Left ventricle myocardium superior (tissue), 1 donor: ENCODE measurements at regions of chr2 and their contacts with region 1.

Region 1: DNA sequence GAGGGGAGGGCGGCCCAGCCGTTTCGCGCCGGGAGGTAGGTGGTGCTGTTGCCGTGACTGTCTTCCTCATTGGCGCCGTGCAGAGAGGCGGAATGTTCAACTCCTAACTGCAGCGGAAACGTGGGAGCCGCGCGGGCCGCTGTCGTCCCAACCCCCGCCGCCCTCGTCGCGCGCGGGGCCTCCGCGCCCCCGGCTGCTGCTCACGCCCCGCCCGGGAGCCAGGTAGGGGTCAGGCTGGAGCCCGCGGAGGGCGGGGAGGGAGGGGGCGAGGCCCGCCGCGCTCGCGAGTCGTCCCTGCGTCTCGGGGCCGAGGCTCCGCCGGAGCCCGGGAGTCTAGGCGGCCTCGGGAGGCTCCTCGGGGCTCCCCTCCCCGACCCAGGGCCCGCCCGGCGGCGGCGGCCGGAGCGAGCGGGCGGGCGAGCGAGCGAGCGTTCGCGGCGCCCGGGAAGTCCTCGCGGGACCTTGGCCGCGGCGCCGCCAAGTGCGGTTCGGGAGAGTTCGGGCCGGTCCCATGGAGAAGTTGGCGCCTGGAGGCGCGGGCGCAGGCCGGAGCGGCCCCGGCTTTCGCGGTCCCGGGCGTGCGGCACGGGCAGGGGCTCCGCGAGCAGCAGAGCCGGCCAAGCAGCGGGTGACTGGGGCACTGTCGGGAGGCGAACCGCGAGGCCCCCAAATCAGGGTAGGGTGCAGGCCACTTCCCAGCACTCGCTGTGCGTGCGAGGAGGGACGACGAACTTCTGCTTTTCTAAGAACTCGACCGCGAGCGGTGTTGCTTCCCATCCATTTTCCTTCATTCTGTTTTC is at the start of gene MAP3K20:
- DNase-seq: peak; percentile 89
- ATAC-seq: peak; percentile 83
- total RNA-seq, gene MAP3K20: 429 TPM

Region 2: DNA sequence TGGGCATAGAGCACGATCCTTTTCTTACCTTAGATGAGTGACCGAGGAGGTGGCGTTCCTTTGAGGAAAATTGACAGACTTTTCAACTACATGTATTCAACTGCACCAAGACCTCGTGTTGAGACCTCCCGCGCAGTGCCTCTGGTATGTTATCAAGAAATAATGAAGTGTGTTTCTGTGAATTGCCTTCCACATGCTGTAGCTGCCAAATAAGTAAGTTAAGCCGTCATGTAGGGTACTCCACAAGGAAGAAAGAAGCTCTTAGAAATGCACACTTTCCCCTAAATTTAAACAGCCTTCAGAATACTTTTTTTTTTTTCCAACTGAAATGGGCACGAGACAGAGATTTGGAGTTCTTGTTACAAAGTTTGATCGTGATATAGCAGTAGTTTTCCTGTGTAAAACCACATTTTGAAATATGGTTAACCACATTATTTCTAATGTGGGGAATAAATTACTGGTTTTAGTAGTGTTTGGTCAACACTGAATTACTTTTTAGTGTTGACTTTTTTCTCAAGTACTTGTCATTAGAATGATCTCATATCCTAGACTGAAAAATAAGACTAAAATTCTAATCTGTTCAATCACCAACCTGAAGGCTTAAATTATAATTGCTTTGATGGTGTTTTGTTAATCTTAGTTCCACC is 489.6 kb before region 1 on chr2:
- intact Hi-C with region 1: no loop called
- DNase-seq: no peak
- ATAC-seq: no peak

Region 3: GRCh38 chr2:172921532-172922236 is 154.3 kb before region 1 on chr2:
- intact Hi-C with region 1: no loop called
- DNase-seq: no peak
- ATAC-seq: no peak

Region 4: DNA sequence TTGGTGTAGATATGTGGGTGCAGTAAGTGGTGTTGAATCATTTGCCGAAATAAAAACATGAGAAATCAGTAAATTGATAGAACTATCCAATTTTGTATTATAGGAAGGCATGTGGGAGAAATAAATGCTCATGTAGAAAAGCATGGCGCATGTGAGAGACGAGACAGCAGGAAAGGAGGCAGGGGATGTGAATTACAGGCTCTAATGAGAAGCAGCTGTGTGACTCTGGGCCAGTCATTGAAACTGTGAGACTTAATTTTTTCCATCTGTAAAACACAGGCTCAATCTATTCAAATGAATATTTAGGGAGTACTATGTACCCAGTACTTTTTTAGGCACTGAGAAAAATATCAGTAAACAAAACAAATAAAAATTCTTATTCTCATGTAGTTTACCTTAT is 42.9 kb before region 1 on chr2:
- intact Hi-C with region 1: loop called (anchors 5 kb)
- DNase-seq: no peak
- ATAC-seq: no peak

Region 5: DNA sequence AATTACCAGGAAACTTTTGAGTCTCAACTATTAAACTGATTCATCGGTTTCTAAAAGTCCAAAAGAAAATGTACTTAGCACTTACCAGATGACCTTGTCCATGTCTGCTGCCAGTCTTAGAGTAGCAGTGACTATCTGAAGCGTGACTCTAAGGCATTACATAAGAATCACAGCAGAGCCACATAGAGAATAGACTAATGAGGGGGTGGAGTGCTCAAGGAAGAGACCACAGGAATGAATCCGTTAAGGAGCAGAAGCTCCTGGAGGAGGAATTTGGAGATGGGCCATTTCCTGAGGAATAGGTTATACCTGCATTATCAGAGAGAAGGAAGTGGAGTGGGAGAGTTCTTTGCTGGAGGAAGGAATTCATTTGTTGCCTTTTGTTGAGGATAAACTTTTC is 115.6 kb after region 1 on chr2:
- intact Hi-C with region 1: loop called (anchors 10 kb)
- DNase-seq: no peak
- ATAC-seq: peak; percentile 26